Activated T-helper 1 cell treated with anti-CD3 and anti-CD28 coated beads, Interleukin-12 subunit alpha, Interleukin-12 subunit beta, Interleukin-2, Interleukin-4 antibody, amounts not matched to agents 30 ng/mL and 10 ng/mL and 1 ng/mL, durations not matched to agents 14 hours and 24 hours and 36 hours (primary cell): ENCODE measurements at regions of chr7 and their contacts with region 1.

Region 1: DNA sequence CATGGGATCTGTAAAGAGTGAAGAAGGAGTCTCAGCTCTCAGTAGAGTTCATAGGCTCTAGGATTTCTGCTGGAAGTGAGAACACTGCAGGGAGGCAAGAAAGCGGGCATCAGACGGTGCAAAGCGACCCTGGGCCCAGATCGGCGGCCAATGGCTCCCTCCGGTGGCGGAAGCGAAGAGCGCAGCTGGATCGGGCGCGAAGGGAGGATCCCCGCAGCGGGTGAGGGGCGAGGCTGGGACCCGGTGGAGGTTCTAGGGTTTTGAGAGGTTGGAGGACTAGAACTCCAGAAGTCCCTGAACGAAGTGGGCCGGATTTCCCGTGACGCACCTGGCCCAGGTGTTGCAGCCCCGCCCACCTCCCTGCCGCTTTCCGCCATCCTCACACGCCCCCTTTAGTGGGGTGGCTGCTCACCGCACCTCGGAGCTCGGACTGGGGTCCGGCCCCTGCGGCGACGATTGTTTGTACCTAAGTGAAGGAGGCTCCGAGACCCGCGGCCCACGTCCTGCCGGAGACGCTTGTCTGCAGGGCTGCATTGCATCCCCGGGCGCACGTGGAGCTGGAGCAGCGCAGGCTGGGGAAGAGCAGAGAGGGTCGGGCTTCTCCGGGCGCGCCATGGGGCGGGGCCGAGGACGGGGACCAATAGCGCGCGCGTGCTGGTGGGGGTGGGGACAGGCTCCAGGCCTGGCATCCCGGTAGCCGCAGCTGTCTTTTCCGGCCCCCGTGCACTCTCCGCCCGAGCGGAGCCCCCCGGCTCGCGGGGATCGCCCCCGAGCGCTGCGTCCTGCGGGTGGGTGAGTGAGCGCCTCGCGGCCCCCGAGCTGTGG is at the start of gene SLC12A9:
- DNase-seq: peak; percentile 86
- H3K4me3 Mint-ChIP-seq: peak within 1 kb of the TSS; percentile 93
- H3K27ac Mint-ChIP-seq: peak within 1 kb of the TSS; percentile 79
- H3K4me1 Mint-ChIP-seq: peaks cover 8% of the 10 kb centered on the region
- H3K27me3 Mint-ChIP-seq: peaks cover 5% of the 10 kb centered on the region
- total RNA-seq, gene SLC12A9: 46.0 and 47.9 TPM in 2 replicates

Region 2: GRCh38 chr7:100271716-100272537 is 580.3 kb before region 1 on chr7:
- intact Hi-C with region 1: no loop called
- DNase-seq: peak; percentile 98
- H3K4me3 Mint-ChIP-seq: peak overlapping the region; percentile 77
- H3K27ac Mint-ChIP-seq: peak overlapping the region; percentile 55
- H3K4me1 Mint-ChIP-seq: peaks cover 14% of the 10 kb centered on the region
- H3K27me3 Mint-ChIP-seq: peaks cover 2% of the 10 kb centered on the region

Region 3: GRCh38 chr7:100586266-100587025 is 265.8 kb before region 1 on chr7 and contains the start of gene FBXO24:
- intact Hi-C with region 1: loop called (anchors 1 kb)
- DNase-seq: peak; percentile 100
- H3K4me3 Mint-ChIP-seq: peak within 1 kb of the TSS; percentile 87
- H3K27ac Mint-ChIP-seq: peak within 1 kb of the TSS; percentile 89
- H3K4me1 Mint-ChIP-seq: peaks cover 23% of the 10 kb centered on the region
- H3K27me3 Mint-ChIP-seq: peaks cover 3% of the 10 kb centered on the region
- total RNA-seq, gene FBXO24: 0.27 and 0.41 TPM in 2 replicates

Region 4: DNA sequence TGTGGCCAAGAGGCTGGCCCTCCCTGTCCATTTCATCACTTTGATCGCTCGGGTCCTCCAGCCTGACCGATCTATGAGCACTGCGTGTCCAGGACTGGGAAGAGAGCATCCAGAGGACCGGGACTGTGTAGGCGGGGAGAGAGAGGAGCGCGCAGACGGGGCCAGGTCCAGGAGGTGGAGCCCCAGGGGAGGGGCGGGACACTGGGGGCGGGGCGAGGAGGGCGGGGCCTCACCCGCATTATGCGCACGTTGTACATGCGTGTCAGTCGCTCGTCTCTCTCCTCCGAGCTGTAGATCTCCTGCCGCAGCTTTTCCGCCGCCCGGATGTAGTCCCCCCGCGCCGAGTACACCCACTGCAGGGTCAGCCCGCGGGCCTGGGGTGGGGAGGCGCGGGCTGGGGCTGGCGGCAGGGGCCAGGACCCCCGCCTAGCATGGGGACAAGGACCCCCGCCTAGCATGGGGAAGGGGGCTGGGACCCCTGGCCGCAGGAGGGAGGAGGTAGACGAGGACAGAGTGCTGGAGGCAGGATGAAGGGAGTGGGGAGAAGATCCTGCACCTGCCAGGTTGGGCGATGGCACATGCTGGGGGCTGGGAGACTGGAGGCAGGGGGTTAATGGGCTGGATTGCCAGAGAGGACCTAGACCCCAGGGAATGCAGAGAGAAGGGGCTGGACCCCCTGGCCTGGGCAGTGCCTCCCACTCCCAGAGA is 225.6 kb before region 1 on chr7:
- intact Hi-C with region 1: no loop called
- DNase-seq: peak; percentile 79
- H3K4me3 Mint-ChIP-seq: peak overlapping the region; percentile 71
- H3K27ac Mint-ChIP-seq: peak overlapping the region; percentile 63
- H3K4me1 Mint-ChIP-seq: peaks cover 45% of the 10 kb centered on the region
- H3K27me3 Mint-ChIP-seq: no peaks in the 10 kb centered on the region

Region 5: GRCh38 chr7:100655908-100656674 is 196.2 kb before region 1 on chr7 and contains the start of gene ACTL6B:
- intact Hi-C with region 1: no loop called
- DNase-seq: peak; percentile 67
- H3K4me3 Mint-ChIP-seq: no peak within 1 kb of the TSS
- H3K27ac Mint-ChIP-seq: no peak within 1 kb of the TSS
- H3K4me1 Mint-ChIP-seq: no peaks in the 10 kb centered on the region
- H3K27me3 Mint-ChIP-seq: peaks cover 33% of the 10 kb centered on the region
- total RNA-seq, gene ACTL6B: not detected in 2 replicates

Region 6: GRCh38 chr7:100673300-100673941 is 178.8 kb before region 1 on chr7 and contains the start of gene GNB2:
- intact Hi-C with region 1: loop called (anchors 1 kb)
- DNase-seq: peak; percentile 99
- H3K4me3 Mint-ChIP-seq: peak within 1 kb of the TSS; percentile 98
- H3K27ac Mint-ChIP-seq: peak within 1 kb of the TSS; percentile 94
- H3K4me1 Mint-ChIP-seq: peaks cover 10% of the 10 kb centered on the region
- H3K27me3 Mint-ChIP-seq: peaks cover 10% of the 10 kb centered on the region
- total RNA-seq, gene GNB2: 218 and 221 TPM in 2 replicates

Region 7: GRCh38 chr7:100803398-100804233 is 48.6 kb before region 1 on chr7:
- intact Hi-C with region 1: loop called (anchors 1 kb)
- DNase-seq: peak; percentile 42
- H3K4me3 Mint-ChIP-seq: no peak overlapping the region
- H3K27ac Mint-ChIP-seq: peak overlapping the region; percentile 71
- H3K4me1 Mint-ChIP-seq: peaks cover 10% of the 10 kb centered on the region
- H3K27me3 Mint-ChIP-seq: peaks cover 13% of the 10 kb centered on the region

Region 8: DNA sequence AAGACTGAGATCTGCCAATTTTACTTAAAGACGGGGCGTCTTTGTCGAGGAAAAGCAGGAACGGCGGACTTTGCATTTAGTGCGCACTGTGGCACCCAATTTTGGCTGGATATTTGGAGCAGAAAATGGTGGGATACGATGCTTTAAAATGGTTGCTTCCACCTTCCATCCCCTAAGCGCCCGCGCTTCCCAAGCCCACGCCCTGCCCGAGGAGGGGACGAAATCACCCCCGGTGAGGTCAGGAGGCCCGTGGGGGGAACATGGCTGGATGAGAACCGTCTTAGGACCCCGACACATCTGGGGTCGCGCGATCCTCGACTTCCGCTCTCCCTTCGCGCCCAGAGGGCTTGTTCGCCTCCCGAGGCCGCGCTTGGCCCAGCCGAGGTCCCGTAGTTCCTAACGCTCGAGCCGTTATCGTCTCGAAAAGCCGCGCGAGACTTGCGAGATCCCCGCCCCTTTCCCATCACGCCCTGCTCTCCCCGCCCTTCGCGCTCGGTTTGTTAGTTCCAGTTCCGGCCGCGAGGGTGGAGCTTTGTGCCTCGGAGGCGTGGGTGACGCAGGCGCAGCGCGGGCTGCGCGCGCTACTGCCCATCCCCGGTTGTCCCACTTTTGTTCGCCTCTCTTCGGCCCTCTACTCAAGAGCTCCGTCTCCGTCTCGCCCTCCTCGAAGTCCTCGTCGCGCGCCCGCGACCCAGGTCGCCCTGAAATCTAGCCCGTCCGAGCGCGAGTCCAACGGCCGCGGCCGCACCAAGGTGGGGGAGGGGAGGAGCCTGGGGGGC is 22.5 kb after region 1 on chr7 and contains the start of gene SRRT:
- intact Hi-C with region 1: loop called (anchors 1 kb)
- DNase-seq: peak; percentile 98
- H3K4me3 Mint-ChIP-seq: peak within 1 kb of the TSS; percentile 98
- H3K27ac Mint-ChIP-seq: peak within 1 kb of the TSS; percentile 97
- H3K4me1 Mint-ChIP-seq: peaks cover 40% of the 10 kb centered on the region
- H3K27me3 Mint-ChIP-seq: no peaks in the 10 kb centered on the region
- total RNA-seq, gene SRRT: 294 and 306 TPM in 2 replicates

Region 9: DNA sequence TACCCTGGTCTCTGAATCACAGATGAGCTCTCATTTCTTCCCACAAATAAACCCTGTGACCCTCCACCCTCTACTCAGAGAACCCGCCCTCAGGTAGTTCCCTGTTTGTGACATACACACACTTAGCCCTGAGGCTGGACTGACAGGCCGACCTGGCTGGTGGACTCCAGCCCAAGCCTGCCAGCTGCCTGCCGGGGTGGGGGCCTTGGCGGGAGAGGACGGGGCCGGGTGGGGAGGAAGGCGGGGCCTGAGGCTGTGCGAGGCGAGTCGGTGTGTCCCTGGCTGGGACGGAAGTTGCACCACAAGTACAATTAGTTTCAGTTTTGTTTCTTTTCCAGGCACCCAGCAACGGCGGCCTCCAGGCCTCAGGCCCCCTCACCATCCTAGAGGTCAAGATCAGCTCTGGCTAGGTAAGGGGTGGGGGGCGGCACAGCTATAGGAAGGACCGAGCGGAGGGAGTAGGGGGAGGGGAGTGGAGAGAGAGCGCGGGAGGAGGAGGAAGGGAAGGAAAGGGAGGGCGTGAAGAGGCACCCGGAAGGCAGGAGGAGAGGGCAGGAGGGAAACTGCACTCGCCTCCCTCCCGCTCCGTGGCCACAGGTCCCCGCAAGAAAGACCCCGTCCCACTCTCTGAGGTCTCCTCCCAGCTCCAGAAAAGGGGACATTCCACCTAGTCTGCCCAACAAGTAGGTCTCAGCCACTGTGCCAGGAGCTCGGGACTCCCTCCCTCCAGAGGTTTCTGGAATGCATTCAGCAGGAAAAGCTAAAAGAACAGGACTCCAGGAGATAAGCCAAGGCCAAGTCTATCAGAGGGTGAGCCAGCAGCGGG is 233.1 kb after region 1 on chr7 and contains the start of gene TRIM56:
- intact Hi-C with region 1: loop called (anchors 1 kb)
- DNase-seq: peak; percentile 76
- H3K4me3 Mint-ChIP-seq: peak within 1 kb of the TSS; percentile 98
- H3K27ac Mint-ChIP-seq: peak within 1 kb of the TSS; percentile 98
- H3K4me1 Mint-ChIP-seq: peaks cover 31% of the 10 kb centered on the region
- H3K27me3 Mint-ChIP-seq: no peaks in the 10 kb centered on the region
- total RNA-seq, gene TRIM56: 41.2 and 45.7 TPM in 2 replicates